PC-3 (cell line): ENCODE measurements at regions of chr18 and their contacts with region 1.

Region 1: GRCh38 chr18:52610451-52611115 is 270.6 kb downstream of the DCC start:
- DNase-seq: no peak
- ATAC-seq: no peak
- H3K4me3 ChIP-seq: no peak overlapping the region
- H3K27ac ChIP-seq: no peak overlapping the region
- H3K4me1 ChIP-seq: no peaks in the 10 kb centered on the region
- H3K27me3 ChIP-seq: no peaks in the 10 kb centered on the region
- CTCF ChIP-seq: no peak

Region 2: DNA sequence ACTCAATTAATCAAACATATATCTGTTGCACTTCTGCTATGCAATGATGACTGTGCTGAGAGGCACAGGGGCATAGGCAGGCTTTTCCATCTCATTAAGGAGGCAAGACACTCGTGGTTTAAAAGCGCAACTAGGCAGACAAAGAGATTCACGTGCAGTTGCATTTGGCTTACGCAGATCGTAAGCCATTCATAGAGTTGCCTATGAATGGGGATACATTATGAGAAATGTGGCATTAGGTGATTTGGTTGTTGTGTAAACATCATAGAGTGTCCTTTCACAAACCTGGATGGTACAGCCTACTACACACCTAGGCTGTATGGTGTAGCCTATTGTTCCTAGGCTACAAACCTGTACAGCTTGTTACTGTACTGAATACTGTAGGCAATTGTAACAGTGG is 14.1 kb after region 1 on chr18:
- CTCF ChIA-PET with region 1: no interaction called
- POLR2A ChIA-PET with region 1: no interaction called
- intact Hi-C with region 1: loop called (anchors 1 kb)
- DNase-seq: no peak
- ATAC-seq: no peak
- H3K4me3 ChIP-seq: no peak overlapping the region
- H3K27ac ChIP-seq: no peak overlapping the region
- H3K4me1 ChIP-seq: no peaks in the 10 kb centered on the region
- H3K27me3 ChIP-seq: no peaks in the 10 kb centered on the region
- CTCF ChIP-seq: no peak